ENCODE measurements at regions of chr3 and their contacts with region 1.

Region 1: DNA sequence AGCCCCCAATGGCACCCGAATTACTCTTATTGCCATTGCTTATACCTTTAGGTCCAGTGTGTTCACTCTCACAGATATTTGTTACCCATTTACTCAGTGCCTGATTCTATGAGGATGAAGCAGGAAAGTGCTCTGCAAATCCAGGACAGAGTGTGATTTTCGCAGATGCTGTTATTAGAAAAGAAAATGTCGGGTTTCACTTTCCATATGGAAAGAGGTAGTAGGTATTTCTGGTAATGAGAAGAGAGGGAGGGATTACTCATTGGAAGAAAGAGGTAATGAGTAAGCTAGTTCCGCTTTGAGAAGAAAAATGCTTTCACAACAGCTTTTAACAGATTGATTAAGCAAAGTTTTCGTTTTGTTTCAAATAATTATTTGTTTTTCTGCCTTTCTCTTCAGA is 336.3 kb upstream of the CFAP20DC start:
- DNase-seq: peak; percentile 88
- ATAC-seq: peak; percentile 75
- H3K4me3 ChIP-seq: peak overlapping the region; percentile 17; the same call in 1 of the 2 replicates
- H3K27ac ChIP-seq: peak overlapping the region; percentile 90
- H3K4me1 ChIP-seq: peaks cover 58% of the 10 kb centered on the region
- H3K27me3 ChIP-seq: no peaks in the 10 kb centered on the region
- CTCF ChIP-seq: no peak
- EP300 ChIP-seq: peak; percentile 95 to 100
- POLR2A ChIP-seq: no peak
- RAD21 ChIP-seq: 0 out of 2 replicates have a peak, but pooled peaks have one; percentile 6

Region 2: DNA sequence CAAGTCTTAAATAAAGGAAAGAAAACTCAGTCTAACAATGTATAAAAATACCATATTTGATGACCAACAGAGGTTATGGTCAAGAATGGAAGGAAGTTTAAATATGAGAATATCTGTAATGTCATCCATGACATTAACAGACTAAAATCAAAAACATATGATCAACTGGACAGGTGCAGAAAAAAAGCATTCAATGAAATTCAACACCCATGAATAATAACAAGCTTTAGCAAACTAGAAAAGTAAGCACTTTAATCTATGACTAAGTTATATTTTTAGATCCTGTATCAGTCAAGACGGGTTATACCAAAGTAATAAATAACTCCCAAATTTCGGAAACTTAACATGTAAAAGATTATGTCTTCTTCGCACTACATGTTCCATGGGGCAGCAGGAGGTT is 398.1 kb before region 1 on chr3:
- CTCF ChIA-PET with region 1: no interaction called
- POLR2A ChIA-PET with region 1: no interaction called
- RAD21 ChIA-PET with region 1: no interaction called
- SMC1A ChIA-PET with region 1: no interaction called
- in situ Hi-C with region 1: no loop called
- intact Hi-C with region 1: no loop called
- DNase-seq: no peak
- ATAC-seq: no peak
- H3K4me3 ChIP-seq: no peak overlapping the region
- H3K27ac ChIP-seq: no peak overlapping the region
- H3K4me1 ChIP-seq: no peaks in the 10 kb centered on the region
- H3K27me3 ChIP-seq: no peaks in the 10 kb centered on the region
- CTCF ChIP-seq: no peak
- EP300 ChIP-seq: no peak
- POLR2A ChIP-seq: no peak
- RAD21 ChIP-seq: no peak

Region 3: GRCh38 chr3:59121346-59122144 is 264.6 kb before region 1 on chr3:
- CTCF ChIA-PET with region 1: no interaction called
- POLR2A ChIA-PET with region 1: no interaction called
- RAD21 ChIA-PET with region 1: no interaction called
- SMC1A ChIA-PET with region 1: no interaction called
- in situ Hi-C with region 1: no loop called
- intact Hi-C with region 1: no loop called
- DNase-seq: no peak
- ATAC-seq: no peak
- H3K4me3 ChIP-seq: no peak overlapping the region
- H3K27ac ChIP-seq: no peak overlapping the region
- H3K4me1 ChIP-seq: no peaks in the 10 kb centered on the region
- H3K27me3 ChIP-seq: 0 out of 4 replicates have a peak, but pooled peaks cover 0 to 3% of the 10 kb centered on the region in 2 experiments
- CTCF ChIP-seq: no peak
- EP300 ChIP-seq: no peak
- POLR2A ChIP-seq: no peak
- RAD21 ChIP-seq: no peak

Region 4: DNA sequence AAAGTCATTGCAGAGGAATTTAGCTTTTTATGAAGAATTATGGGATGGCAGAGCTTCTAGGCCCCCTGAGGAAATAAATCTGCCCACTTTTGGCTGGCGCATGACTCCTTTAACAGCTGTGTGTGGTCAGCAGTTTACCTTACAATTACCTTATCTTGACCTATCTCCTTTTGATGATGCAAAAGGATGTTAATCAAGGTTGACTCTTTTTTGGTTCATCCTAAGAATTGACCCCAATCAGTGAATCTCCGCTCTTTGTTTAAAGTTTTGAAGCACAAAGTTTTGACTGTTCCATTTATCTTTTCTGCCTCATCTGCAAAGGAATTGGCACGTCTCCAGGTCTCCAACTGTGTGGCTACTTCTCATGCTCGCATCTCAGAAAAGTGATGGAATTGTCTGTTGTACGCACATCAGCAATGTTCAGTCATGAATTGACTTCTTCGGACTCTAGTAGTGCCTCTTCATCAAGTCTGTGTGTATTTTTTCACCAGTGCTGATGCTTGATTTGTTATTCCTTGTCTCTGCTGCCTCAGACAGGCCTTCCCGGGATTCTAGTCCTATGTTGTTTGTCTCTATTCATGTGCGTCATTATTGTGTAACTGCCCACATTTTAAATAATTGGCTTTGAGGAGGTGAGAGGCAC is 140.2 kb before region 1 on chr3:
- CTCF ChIA-PET with region 1: interaction called, 10 read pairs
- POLR2A ChIA-PET with region 1: no interaction called
- RAD21 ChIA-PET with region 1: interaction called, 8 read pairs
- SMC1A ChIA-PET with region 1: interaction called, 7 read pairs
- in situ Hi-C with region 1: no loop called
- intact Hi-C with region 1: loop called (anchors 5 kb)
- DNase-seq: no peak
- ATAC-seq: no peak
- H3K4me3 ChIP-seq: no peak overlapping the region
- H3K27ac ChIP-seq: peak overlapping the region; percentile 25; the same call in 1 of the 2 replicates
- H3K4me1 ChIP-seq: peaks cover 18% of the 10 kb centered on the region
- H3K27me3 ChIP-seq: no peaks in the 10 kb centered on the region
- CTCF ChIP-seq: no peak
- EP300 ChIP-seq: no peak
- POLR2A ChIP-seq: no peak
- RAD21 ChIP-seq: no peak

Region 5: DNA sequence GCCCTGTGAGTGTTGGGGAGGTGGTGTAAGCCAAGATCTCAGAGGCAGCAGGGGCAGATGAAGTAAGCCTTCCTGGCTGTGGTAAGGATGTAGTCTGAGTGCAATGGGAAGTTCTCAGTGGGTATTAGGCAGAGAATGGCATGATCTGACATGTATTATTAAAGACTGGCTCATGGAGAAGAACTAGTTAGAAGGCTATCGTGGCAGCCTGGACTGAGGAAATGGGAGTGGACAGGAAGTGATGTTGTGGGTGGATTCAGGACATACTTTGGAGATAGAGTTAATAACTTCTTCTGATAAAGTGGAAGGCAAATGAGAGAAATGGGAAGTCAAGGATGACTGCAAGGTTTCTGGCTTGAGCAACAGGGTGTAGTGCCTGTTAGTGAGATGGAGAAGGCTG is 85.4 kb before region 1 on chr3:
- CTCF ChIA-PET with region 1: no interaction called
- POLR2A ChIA-PET with region 1: no interaction called
- RAD21 ChIA-PET with region 1: no interaction called
- SMC1A ChIA-PET with region 1: no interaction called
- in situ Hi-C with region 1: no loop called
- intact Hi-C with region 1: no loop called
- DNase-seq: no peak
- ATAC-seq: no peak
- H3K4me3 ChIP-seq: no peak overlapping the region
- H3K27ac ChIP-seq: no peak overlapping the region
- H3K4me1 ChIP-seq: no peaks in the 10 kb centered on the region
- H3K27me3 ChIP-seq: no peaks in the 10 kb centered on the region
- CTCF ChIP-seq: no peak
- EP300 ChIP-seq: no peak
- POLR2A ChIP-seq: no peak
- RAD21 ChIP-seq: no peak

Region 6: GRCh38 chr3:59374818-59375211 is 11.3 kb before region 1 on chr3:
- CTCF ChIA-PET with region 1: interaction called, 7 read pairs
- POLR2A ChIA-PET with region 1: interaction called, 7 read pairs
- RAD21 ChIA-PET with region 1: interaction called, 16 read pairs
- SMC1A ChIA-PET with region 1: interaction called, 29 read pairs
- in situ Hi-C with region 1: no loop called
- intact Hi-C with region 1: no loop called
- DNase-seq: peak; percentile 91
- ATAC-seq: peak; percentile 99
- H3K4me3 ChIP-seq: no peak overlapping the region
- H3K27ac ChIP-seq: no peak overlapping the region
- H3K4me1 ChIP-seq: peaks cover 9% of the 10 kb centered on the region
- H3K27me3 ChIP-seq: no peaks in the 10 kb centered on the region
- CTCF ChIP-seq: no peak; a peak in 1 of 6 replicates
- EP300 ChIP-seq: 0 out of 4 replicates have a peak, but pooled peaks of 1 of the 2 experiments have one; percentile 57
- POLR2A ChIP-seq: no peak
- RAD21 ChIP-seq: peak; percentile 31; the same call in 1 of the 2 replicates

Region 7: GRCh38 chr3:59444294-59444671 is 58.1 kb after region 1 on chr3:
- CTCF ChIA-PET with region 1: interaction called, 4 read pairs
- POLR2A ChIA-PET with region 1: interaction called, 12 read pairs
- RAD21 ChIA-PET with region 1: interaction called, 40 read pairs
- SMC1A ChIA-PET with region 1: interaction called, 33 read pairs
- in situ Hi-C with region 1: no loop called
- intact Hi-C with region 1: no loop called
- DNase-seq: no peak
- ATAC-seq: peak; percentile 86
- H3K4me3 ChIP-seq: no peak overlapping the region
- H3K27ac ChIP-seq: peak overlapping the region; percentile 72
- H3K4me1 ChIP-seq: peaks cover 10% of the 10 kb centered on the region
- H3K27me3 ChIP-seq: no peaks in the 10 kb centered on the region
- CTCF ChIP-seq: no peak
- EP300 ChIP-seq: no peak
- POLR2A ChIP-seq: no peak
- RAD21 ChIP-seq: no peak

Region 8: DNA sequence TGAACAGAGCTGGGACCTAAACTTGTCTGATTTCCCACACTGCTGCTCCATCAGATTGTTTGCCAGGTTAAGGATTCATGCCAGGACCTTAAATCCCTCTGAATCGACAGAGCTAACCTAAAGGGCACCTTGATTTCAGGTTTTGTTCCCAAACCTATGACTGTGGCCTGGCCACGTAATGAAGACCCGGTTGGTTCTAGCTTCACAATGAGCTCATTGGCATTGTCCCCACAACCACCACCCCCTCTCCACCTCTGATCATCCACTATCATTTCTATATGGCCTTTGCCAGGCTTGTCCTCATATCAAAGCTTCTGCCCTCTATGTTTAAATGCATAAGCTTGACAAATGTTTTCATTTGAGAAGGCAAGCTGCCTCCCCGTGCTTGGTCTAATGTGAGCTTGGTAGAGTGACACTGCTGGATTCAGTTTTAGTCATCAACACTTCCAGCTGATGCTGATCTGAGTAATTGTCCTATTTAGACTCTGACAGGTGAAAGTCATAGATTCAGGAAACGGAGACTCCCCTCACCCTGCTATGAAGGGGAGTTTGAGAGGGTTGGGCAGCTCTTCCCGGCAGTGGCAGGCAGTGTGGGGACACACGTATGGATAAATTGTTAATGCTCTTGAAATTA is 70.8 kb after region 1 on chr3:
- CTCF ChIA-PET with region 1: interaction called, 7 read pairs
- POLR2A ChIA-PET with region 1: interaction called, 6 read pairs
- RAD21 ChIA-PET with region 1: interaction called, 18 read pairs
- SMC1A ChIA-PET with region 1: interaction called, 14 read pairs
- in situ Hi-C with region 1: loop called (anchors 5 kb)
- intact Hi-C with region 1: no loop called
- DNase-seq: peak; percentile 67
- ATAC-seq: peak; percentile 93
- H3K4me3 ChIP-seq: no peak overlapping the region
- H3K27ac ChIP-seq: peak overlapping the region; percentile 71
- H3K4me1 ChIP-seq: peaks cover 23% of the 10 kb centered on the region
- H3K27me3 ChIP-seq: no peaks in the 10 kb centered on the region
- CTCF ChIP-seq: no peak
- EP300 ChIP-seq: peak; percentile 70 to 88; a peak in 3 of 4 replicates
- POLR2A ChIP-seq: no peak
- RAD21 ChIP-seq: peak; percentile 33; the same call in 1 of the 2 replicates

Region 9: DNA sequence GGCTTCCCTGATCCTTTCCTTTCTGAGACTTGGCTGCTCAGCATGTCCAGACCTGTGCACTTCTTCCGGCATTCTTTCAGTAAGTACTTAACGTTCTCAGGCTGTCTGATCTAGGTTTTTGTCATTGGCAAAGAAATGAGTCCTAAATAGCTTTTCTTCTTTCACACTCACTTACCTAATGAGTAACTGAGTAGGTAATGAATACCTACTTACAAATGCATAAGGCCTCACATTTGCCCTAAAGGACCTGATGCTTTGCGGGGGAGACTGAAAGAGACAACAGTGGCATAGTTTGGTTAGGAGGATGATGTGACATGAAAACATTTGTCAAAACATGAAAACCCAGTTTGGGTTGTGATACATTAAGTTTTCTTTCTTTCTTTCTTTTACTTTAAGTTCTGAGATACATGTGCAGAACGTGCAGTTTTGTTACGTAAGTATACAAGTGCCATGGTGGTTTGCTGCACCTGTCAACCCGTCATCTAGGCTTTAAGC is 180.4 kb after region 1 on chr3:
- CTCF ChIA-PET with region 1: interaction called, 3 read pairs
- POLR2A ChIA-PET with region 1: interaction called, 4 read pairs
- RAD21 ChIA-PET with region 1: interaction called, 15 read pairs
- SMC1A ChIA-PET with region 1: interaction called, 17 read pairs
- in situ Hi-C with region 1: no loop called
- intact Hi-C with region 1: loop called (anchors 1 kb)
- DNase-seq: peak; percentile 68
- ATAC-seq: peak; percentile 98
- H3K4me3 ChIP-seq: no peak overlapping the region
- H3K27ac ChIP-seq: peak overlapping the region; percentile 54
- H3K4me1 ChIP-seq: peaks cover 32% of the 10 kb centered on the region
- H3K27me3 ChIP-seq: no peaks in the 10 kb centered on the region
- CTCF ChIP-seq: no peak
- EP300 ChIP-seq: peak; percentile 87 to 93; a peak in 3 of 4 replicates
- POLR2A ChIP-seq: no peak
- RAD21 ChIP-seq: no peak

Region 10: GRCh38 chr3:60277361-60277800 is 891.2 kb after region 1 on chr3:
- CTCF ChIA-PET with region 1: no interaction called
- POLR2A ChIA-PET with region 1: no interaction called
- RAD21 ChIA-PET with region 1: no interaction called
- SMC1A ChIA-PET with region 1: no interaction called
- in situ Hi-C with region 1: no loop called
- intact Hi-C with region 1: no loop called
- DNase-seq: no peak
- ATAC-seq: no peak
- H3K4me3 ChIP-seq: no peak overlapping the region
- H3K27ac ChIP-seq: no peak overlapping the region
- H3K4me1 ChIP-seq: no peaks in the 10 kb centered on the region
- H3K27me3 ChIP-seq: no peaks in the 10 kb centered on the region
- CTCF ChIP-seq: no peak
- EP300 ChIP-seq: no peak
- POLR2A ChIP-seq: no peak
- RAD21 ChIP-seq: no peak

Measured in GM12878 (cell line).